CD8-positive, alpha-beta T cell (primary cell): ENCODE measurements at regions of chr1 and their contacts with region 1.

Region 1: DNA sequence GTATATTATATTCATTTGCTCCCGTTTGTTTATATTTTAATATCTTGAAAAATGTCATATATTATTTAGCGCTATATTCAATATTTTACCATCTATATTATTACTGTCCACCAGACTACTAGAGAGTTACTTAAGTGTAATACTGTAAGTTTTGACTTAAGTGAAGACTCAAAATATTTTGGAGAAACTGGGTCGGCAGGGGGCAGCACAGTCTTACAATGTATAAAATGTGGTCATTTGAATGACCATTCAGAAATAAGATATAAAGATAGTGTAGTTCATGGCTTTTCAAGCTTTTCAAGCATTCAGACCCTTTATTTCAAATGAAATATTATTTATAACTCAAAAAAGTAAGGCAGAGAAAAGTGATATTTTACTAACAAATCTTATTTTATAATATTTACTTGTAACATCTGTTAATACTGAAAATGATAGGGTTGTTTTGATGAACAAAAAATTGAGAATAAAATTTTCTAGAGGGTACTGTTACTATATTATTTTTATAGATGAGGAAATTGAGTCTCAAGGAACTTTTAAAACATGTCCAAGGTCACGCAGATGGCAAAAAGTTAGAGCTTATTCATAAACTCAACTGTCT is 89.0 kb upstream of the SERTAD4 start:
- DNase-seq: peak in 5 of 9 experiments; percentile 7 to 44 (median 20)
- ATAC-seq: no peak
- H3K4me3 ChIP-seq: no peak overlapping the region
- H3K4me3 Mint-ChIP-seq: no peak overlapping the region
- H3K27ac ChIP-seq: no peak overlapping the region
- H3K27ac Mint-ChIP-seq: no peak overlapping the region
- H3K4me1 ChIP-seq: no peaks in the 10 kb centered on the region
- H3K4me1 Mint-ChIP-seq: no peaks in the 10 kb centered on the region
- H3K27me3 ChIP-seq: no peaks in the 10 kb centered on the region
- H3K27me3 Mint-ChIP-seq: peaks cover 12% of the 10 kb centered on the region
- CTCF ChIP-seq: peak; percentile 36

Region 2: GRCh38 chr1:209937996-209938959 is 205.3 kb before region 1 on chr1 and contains the start of gene SYT14:
- CTCF ChIA-PET with region 1: no interaction called
- POLR2A ChIA-PET with region 1: no interaction called
- intact Hi-C with region 1: no loop called
- DNase-seq: peak in 1 of 9 experiments; percentile 17
- ATAC-seq: no peak
- H3K4me3 ChIP-seq: no peak within 1 kb of the TSS
- H3K4me3 Mint-ChIP-seq: peak within 1 kb of the TSS; percentile 69
- H3K27ac ChIP-seq: no peak within 1 kb of the TSS
- H3K27ac Mint-ChIP-seq: no peak within 1 kb of the TSS
- H3K4me1 ChIP-seq: no peaks in the 10 kb centered on the region
- H3K4me1 Mint-ChIP-seq: peaks cover 13% of the 10 kb centered on the region
- H3K27me3 ChIP-seq: peaks cover 0 to 5% of the 10 kb centered on the region in 2 experiments
- H3K27me3 Mint-ChIP-seq: peaks cover 63% of the 10 kb centered on the region
- CTCF ChIP-seq: no peak
- total RNA-seq, gene SYT14: not detected

Region 3: DNA sequence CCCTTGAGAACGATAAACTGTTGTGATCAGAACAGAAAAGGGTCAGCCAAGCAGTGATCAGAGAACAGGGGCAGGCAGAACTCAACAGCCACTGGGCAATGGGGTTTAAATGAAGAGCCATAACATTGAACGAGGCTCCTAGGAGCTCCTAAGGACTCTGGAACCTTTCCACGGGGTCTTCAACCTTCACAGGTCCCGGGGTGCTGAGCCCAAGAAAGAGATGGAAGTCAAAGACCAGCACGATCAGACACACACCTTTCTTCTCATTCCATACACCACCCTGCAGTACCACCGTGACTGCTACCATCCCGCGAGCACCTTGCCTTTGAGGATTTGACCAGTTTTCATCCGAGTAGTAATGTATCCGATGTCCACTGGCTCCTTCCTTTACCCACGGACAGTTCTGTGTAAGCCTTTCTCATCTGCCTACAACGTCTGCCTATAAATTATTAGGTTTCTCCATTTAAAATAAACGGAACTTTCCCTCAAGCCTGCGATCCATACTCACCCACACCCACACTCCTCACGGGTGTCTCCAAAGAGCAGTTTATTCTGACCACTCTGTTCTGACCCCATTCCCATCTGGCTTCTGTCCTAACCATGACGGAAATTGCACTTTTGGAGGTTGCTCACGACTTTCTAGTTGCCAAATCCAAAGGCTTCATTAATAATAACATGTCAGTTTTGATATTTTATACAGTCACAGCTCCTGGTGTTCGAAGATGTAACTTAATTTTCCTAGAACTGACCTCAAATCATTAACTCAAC is 168.3 kb after region 1 on chr1:
- CTCF ChIA-PET with region 1: interaction called, 4 read pairs
- POLR2A ChIA-PET with region 1: no interaction called
- intact Hi-C with region 1: loop called in 1 of 2 experiments (anchors 2 kb)
- DNase-seq: no peak
- ATAC-seq: no peak
- H3K4me3 ChIP-seq: no peak overlapping the region
- H3K4me3 Mint-ChIP-seq: peak overlapping the region; percentile 91
- H3K27ac ChIP-seq: no peak overlapping the region
- H3K27ac Mint-ChIP-seq: no peak overlapping the region
- H3K4me1 ChIP-seq: no peaks in the 10 kb centered on the region
- H3K4me1 Mint-ChIP-seq: peaks cover 8% of the 10 kb centered on the region
- H3K27me3 ChIP-seq: no peaks in the 10 kb centered on the region
- H3K27me3 Mint-ChIP-seq: peaks cover 20% of the 10 kb centered on the region
- CTCF ChIP-seq: no peak